ENCODE measurements at regions of chr4 and their contacts with region 1.

Region 1: GRCh38 chr4:101155368-101155767 is 192.0 kb downstream of the PPP3CA start:
- DNase-seq: no peak
- H3K4me3 Mint-ChIP-seq: no peak overlapping the region
- H3K27ac Mint-ChIP-seq: no peak overlapping the region
- H3K4me1 Mint-ChIP-seq: peaks cover 29% of the 10 kb centered on the region
- H3K27me3 Mint-ChIP-seq: no peaks in the 10 kb centered on the region

Region 2: GRCh38 chr4:100880007-100880406 is 275.4 kb before region 1 on chr4:
- intact Hi-C with region 1: no loop called
- DNase-seq: no peak
- H3K4me3 Mint-ChIP-seq: no peak overlapping the region
- H3K27ac Mint-ChIP-seq: no peak overlapping the region
- H3K4me1 Mint-ChIP-seq: no peaks in the 10 kb centered on the region
- H3K27me3 Mint-ChIP-seq: peaks cover 6% of the 10 kb centered on the region

Region 3: DNA sequence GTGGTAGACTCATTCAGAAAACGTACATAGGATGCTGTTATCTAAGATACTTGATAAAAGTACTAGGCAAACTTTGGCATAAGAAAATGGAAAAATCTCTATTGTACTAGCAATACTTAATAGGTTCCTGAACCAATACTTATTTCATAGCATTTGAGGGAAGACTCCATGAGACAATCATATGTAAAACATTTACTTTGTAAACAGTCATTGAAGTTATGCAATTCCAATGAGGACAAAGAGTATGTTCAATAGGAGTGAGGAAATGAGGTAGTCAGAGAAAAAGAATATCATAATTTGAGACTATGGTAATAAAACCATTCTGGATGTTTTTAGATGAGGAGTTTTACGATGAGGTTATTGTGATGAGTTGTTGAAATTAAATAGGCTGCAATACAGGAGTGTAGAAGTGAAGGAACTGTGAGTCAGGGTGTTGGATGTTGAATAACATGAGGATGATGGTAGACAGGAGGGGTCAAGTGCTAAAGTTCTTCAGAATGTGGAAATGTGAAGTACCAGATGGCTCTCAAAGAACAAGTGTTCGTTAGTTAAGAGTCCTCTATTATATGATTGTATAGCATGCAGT is 205.9 kb before region 1 on chr4:
- intact Hi-C with region 1: no loop called
- DNase-seq: no peak
- H3K4me3 Mint-ChIP-seq: no peak overlapping the region
- H3K27ac Mint-ChIP-seq: no peak overlapping the region
- H3K4me1 Mint-ChIP-seq: no peaks in the 10 kb centered on the region
- H3K27me3 Mint-ChIP-seq: peaks cover 27% of the 10 kb centered on the region

Region 4: GRCh38 chr4:101103381-101104142 is 51.8 kb before region 1 on chr4:
- intact Hi-C with region 1: loop called (anchors 1 kb)
- DNase-seq: no peak
- H3K4me3 Mint-ChIP-seq: peak overlapping the region; percentile 11
- H3K27ac Mint-ChIP-seq: peak overlapping the region; percentile 52
- H3K4me1 Mint-ChIP-seq: peaks cover 25% of the 10 kb centered on the region
- H3K27me3 Mint-ChIP-seq: no peaks in the 10 kb centered on the region

Region 5: GRCh38 chr4:101191302-101192098 is 36.1 kb after region 1 on chr4:
- intact Hi-C with region 1: no loop called
- DNase-seq: no peak
- H3K4me3 Mint-ChIP-seq: no peak overlapping the region
- H3K27ac Mint-ChIP-seq: no peak overlapping the region
- H3K4me1 Mint-ChIP-seq: peaks cover 12% of the 10 kb centered on the region
- H3K27me3 Mint-ChIP-seq: no peaks in the 10 kb centered on the region

Region 6: DNA sequence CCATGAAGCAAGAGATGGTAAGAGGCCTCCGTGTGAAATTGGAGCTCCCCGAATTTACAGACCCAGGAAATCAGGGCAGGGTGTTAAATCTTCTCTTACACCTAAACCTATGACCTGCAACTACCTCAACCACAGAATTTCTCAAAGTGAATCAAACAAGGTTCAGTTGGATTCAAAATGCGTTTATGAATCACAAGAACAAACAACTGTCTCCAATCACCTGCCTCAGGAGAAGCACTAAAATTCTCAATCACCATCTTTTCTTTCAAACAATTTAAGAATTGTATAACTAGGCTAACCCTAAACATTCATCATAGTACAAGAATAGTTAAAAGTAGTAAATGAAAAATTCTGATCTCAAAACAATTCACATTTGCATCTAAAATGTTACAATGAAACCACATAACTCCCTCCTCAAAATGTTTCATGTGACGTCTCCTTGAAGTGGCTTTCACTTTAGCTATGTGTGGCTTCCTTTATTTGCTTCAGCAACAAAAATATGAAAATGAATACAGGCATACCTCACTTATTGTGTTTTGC is 172.8 kb after region 1 on chr4:
- intact Hi-C with region 1: loop called (anchors 5 kb)
- DNase-seq: no peak
- H3K4me3 Mint-ChIP-seq: peak overlapping the region; percentile 46
- H3K27ac Mint-ChIP-seq: peak overlapping the region; percentile 88
- H3K4me1 Mint-ChIP-seq: peaks cover 34% of the 10 kb centered on the region
- H3K27me3 Mint-ChIP-seq: peaks cover 24% of the 10 kb centered on the region

Region 7: GRCh38 chr4:101439926-101440325 is 284.6 kb after region 1 on chr4:
- intact Hi-C with region 1: no loop called
- DNase-seq: no peak
- H3K4me3 Mint-ChIP-seq: no peak overlapping the region
- H3K27ac Mint-ChIP-seq: no peak overlapping the region
- H3K4me1 Mint-ChIP-seq: no peaks in the 10 kb centered on the region
- H3K27me3 Mint-ChIP-seq: peaks cover 8% of the 10 kb centered on the region